ENCODE measurements at regions of chr22 and their contacts with region 1.

Region 1: GRCh38 chr22:41732096-41732772 is 32.9 kb downstream of the MEI1 start:
- DNase-seq: no peak
- ATAC-seq: no peak
- H3K4me3 ChIP-seq: no peak overlapping the region
- H3K27ac ChIP-seq: no peak overlapping the region
- H3K4me1 ChIP-seq: no peaks in the 10 kb centered on the region
- H3K27me3 ChIP-seq: no peaks in the 10 kb centered on the region

Region 2: GRCh38 chr22:41636467-41636866 is 95.8 kb before region 1 on chr22:
- intact Hi-C with region 1: no loop called
- DNase-seq: peak; percentile 30 to 63 (median 62)
- ATAC-seq: peak; percentile 82 to 85
- H3K4me3 ChIP-seq: no peak overlapping the region
- H3K27ac ChIP-seq: peak overlapping the region; percentile 84
- H3K4me1 ChIP-seq: peaks cover 2% of the 10 kb centered on the region
- H3K27me3 ChIP-seq: no peaks in the 10 kb centered on the region

Region 3: DNA sequence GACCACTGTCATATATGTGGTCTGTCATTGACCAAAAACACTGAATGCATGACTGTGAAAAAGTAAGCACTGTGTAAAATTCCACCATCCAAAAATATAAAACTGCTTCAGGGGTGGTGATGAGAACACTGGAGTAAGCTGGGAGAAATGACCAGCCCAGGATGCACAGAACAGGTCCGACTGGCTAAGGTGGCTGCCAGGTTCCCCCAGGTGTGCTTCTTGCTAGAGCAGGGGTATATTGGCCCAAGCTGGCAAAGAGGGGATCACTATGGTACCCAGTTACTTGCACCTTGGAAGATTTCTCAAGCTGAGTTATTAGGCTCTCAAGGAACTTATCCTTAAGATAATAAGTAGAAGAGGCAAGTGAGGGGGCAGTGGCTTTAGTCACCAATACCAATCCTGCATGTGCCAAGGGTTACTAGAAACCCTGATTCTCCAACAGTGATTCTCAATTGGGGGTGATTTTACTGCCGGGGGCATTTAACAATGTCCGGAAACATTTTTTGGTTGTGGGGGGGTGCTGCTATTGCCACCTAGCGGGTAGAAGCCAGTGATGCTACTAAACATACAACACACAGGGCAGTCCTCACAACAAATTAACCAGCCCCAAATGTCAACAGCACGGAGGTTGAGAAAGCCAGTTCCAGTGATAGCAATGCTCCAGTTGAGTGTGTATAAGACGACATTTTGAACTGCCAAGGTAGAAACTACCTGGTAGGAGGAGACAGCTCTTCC is 59.3 kb before region 1 on chr22:
- intact Hi-C with region 1: loop called in 1 of 4 experiments (anchors 10 kb)
- DNase-seq: no peak
- ATAC-seq: no peak
- H3K4me3 ChIP-seq: no peak overlapping the region
- H3K27ac ChIP-seq: no peak overlapping the region
- H3K4me1 ChIP-seq: peaks cover 4% of the 10 kb centered on the region
- H3K27me3 ChIP-seq: no peaks in the 10 kb centered on the region

Region 4: DNA sequence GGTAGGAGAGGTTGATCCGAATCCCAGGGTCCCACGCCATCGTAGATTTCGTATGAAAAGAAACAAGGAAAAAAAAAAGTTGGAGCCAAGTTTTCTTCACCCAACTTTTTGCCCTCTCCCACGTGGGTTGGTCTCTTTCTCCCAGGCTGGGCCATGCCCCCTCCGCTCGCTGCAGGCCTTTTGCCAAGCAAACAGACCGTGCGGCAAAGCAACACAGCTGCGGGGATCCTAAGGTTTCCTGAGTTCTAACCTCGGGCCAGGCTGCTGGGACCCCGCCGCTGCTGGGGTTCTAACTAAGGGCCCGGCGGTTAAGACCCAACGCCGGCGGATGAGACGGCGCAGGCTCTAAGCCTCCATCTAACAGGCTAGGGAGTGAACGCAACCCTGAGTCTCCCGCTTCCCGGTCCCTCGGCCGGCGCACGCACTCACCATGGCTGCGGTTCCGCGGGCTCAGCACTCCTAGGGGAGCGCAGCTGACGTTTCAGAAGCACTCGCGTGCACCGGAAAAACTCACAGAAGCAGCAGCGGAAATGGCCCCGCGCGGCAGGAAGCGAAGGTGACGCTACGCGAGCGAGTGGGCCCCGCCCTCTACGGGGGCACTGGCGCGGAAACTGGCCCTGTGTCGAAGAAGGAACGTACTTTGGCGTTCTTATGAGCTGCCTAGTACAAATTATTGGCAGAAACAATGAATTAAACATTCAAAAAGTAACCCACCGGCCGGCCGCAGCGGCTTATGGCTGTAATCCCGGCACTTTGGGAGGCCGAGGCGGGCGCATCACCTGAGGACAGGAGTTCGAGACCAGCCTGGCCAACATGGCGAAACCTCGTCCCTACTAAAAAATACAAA is 43.6 kb before region 1 on chr22 and contains the start of gene SNU13:
- intact Hi-C with region 1: no loop called
- DNase-seq: peak; percentile 94 to 97 (median 97)
- ATAC-seq: peak; percentile 97
- H3K4me3 ChIP-seq: peak within 1 kb of the TSS; percentile 85
- H3K27ac ChIP-seq: peak within 1 kb of the TSS; percentile 94
- H3K4me1 ChIP-seq: peaks cover 3% of the 10 kb centered on the region
- H3K27me3 ChIP-seq: no peaks in the 10 kb centered on the region
- total RNA-seq, gene SNU13: 195 to 233 (median 216) TPM